ENCODE measurements at regions of chr10 and their contacts with region 1.

Region 1: DNA sequence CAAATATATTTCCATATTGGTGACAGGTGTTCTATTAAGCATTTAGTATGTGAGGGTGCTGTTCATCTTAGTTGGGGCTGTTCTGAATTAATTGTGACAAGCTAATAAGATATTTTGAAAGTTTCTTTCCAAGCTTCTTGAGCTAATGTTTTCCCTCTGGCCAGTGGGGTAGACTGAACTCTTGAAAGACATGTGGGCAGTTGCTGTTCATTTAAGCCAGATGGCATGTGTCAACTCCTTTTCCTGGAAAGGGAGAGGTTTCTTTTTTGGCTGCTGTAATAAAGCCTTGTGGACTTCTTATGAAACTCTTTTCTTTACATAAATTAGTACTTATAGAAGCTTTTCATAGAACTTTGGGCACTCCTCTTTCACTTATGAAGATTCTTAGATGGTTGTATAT is 21.7 kb downstream of the RAB18 start:
- DNase-seq: no peak
- H3K4me3 Mint-ChIP-seq: no peak overlapping the region
- H3K27ac Mint-ChIP-seq: no peak overlapping the region
- H3K4me1 Mint-ChIP-seq: peaks cover 51% of the 10 kb centered on the region
- H3K27me3 Mint-ChIP-seq: no peaks in the 10 kb centered on the region

Region 2: DNA sequence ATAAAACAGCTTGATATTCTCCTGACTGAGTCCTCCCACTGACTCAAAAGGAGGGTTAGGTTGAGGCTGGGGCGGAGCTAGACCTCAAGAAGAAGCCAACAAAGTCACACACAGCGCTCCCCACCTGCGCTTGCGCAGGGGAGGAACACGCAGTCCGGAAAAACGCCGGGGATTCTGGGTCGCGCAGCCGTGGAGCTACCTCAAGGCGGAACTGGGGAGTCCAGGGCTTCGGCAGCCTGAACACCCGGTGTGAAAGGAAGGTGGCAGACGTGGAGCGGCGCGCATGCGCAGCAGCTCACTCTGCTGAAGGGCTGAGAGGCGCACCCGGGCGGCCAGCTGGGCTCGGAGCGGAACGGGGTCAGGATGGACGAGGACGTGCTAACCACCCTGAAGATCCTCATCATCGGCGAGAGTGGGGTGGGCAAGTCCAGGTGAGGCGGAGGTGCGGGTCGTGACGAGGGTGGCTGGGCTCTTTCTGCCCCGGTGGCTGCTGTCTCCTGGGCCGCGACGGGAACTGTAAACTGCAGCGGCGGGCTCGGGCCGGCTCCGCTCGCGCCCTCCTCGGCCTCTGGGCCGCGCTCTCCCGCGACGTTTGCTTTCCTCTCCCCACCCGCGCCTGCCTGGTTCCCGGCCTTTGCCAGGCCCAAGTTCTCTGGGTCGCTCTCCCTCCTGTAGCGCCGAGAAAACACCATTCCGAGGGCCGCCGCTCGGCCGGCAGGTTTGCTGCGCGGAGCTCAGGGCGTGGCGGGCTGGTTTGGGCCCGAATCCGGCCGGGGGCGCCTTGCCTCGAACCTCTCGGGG is 21.6 kb before region 1 on chr10 and contains the start of gene RAB18:
- intact Hi-C with region 1: loop called (anchors 2 kb)
- DNase-seq: peak; percentile 99
- H3K4me3 Mint-ChIP-seq: peak within 1 kb of the TSS; percentile 99
- H3K27ac Mint-ChIP-seq: peak within 1 kb of the TSS; percentile 98
- H3K4me1 Mint-ChIP-seq: peaks cover 44% of the 10 kb centered on the region
- H3K27me3 Mint-ChIP-seq: peaks cover 6% of the 10 kb centered on the region
- total RNA-seq, gene RAB18: 55.4 and 58.3 TPM in 2 replicates

Region 3: GRCh38 chr10:27568196-27569175 is 42.7 kb after region 1 on chr10:
- intact Hi-C with region 1: no loop called
- DNase-seq: peak; percentile 66
- H3K4me3 Mint-ChIP-seq: peak overlapping the region; percentile 18
- H3K27ac Mint-ChIP-seq: peak overlapping the region; percentile 20
- H3K4me1 Mint-ChIP-seq: peaks cover 28% of the 10 kb centered on the region
- H3K27me3 Mint-ChIP-seq: peaks cover 3% of the 10 kb centered on the region